ENCODE measurements at regions of chr14 and their contacts with region 1.

Region 1: GRCh38 chr14:88562831-88563686 is at the start of gene ZC3H14:
- DNase-seq: peak; percentile 94
- H3K4me3 ChIP-seq: peak within 1 kb of the TSS; percentile 87
- H3K27ac ChIP-seq: peak within 1 kb of the TSS; percentile 73
- H3K4me1 ChIP-seq: peaks cover 14% of the 10 kb centered on the region
- H3K27me3 ChIP-seq: no peaks in the 10 kb centered on the region
- total RNA-seq, gene ZC3H14: 70.0 and 70.1 TPM in 2 replicates

Region 2: GRCh38 chr14:88013750-88014349 is 549.2 kb before region 1 on chr14:
- in situ Hi-C with region 1: loop called (anchors 25 kb)
- DNase-seq: peak; percentile 82
- H3K4me3 ChIP-seq: no peak overlapping the region
- H3K27ac ChIP-seq: no peak overlapping the region
- H3K4me1 ChIP-seq: peaks cover 3% of the 10 kb centered on the region; the same call in 1 of the 2 replicates
- H3K27me3 ChIP-seq: no peaks in the 10 kb centered on the region